CD14-positive monocyte (primary cell): ENCODE measurements at regions of chr4 and their contacts with region 1.

Region 1: DNA sequence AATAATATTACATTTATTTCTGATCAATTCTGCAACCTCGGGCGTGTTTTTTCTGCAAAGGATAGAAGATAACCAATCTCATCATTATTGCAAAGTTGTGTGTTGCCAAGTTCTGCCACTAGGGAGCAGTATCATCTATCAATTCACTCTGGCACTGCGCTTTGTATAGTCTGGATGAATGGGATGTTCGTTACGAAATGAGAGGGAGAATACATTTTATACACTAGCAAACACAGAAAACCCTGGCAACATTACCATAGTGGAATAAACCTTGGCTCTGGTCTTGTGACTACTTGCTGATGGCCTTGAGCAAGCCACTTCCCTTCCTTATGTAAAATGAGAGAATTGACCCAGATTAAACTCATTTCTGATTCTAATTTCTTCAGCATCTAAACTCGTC is 97.5 kb upstream of the ZNF518B start:
- DNase-seq: peak; percentile 35 to 62 (median 47)
- H3K4me3 ChIP-seq: no peak overlapping the region
- H3K4me3 Mint-ChIP-seq: no peak overlapping the region
- H3K27ac ChIP-seq: no peak overlapping the region
- H3K27ac Mint-ChIP-seq: peak overlapping the region in 1 of 7 donors; percentile 73
- H3K4me1 ChIP-seq: peaks cover 15 to 16% of the 10 kb centered on the region in 2 donors
- H3K4me1 Mint-ChIP-seq: peaks cover 30% of the 10 kb centered on the region
- H3K27me3 ChIP-seq: no peaks in the 10 kb centered on the region
- H3K27me3 Mint-ChIP-seq: no peaks in the 10 kb centered on the region
- CTCF ChIP-seq: peak; percentile 84

Region 2: DNA sequence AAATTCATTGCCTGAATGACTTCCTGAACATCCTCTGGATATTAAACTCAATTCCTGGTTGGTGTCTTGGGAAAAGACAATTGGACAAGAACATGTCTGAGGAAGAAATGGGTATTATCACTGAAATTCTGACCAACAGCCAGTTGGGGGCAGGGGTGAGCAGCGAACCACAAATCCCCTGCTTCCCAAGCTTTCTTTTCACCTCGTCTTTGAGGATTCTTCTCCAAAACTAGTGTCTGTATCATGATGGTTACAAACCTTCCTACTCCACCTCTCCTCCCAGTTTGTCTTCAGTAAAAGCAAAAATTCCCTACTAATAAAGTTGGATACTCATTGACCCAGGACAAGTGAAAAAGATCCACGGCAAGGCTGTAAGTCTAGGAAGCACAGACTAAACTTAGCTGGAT is 389.8 kb before region 1 on chr4:
- intact Hi-C with region 1: loop called in 1 of 2 experiments (anchors 5 kb)
- DNase-seq: peak; percentile 19 to 43 (median 41)
- H3K4me3 ChIP-seq: no peak overlapping the region
- H3K4me3 Mint-ChIP-seq: no peak overlapping the region
- H3K27ac ChIP-seq: no peak overlapping the region
- H3K27ac Mint-ChIP-seq: no peak overlapping the region
- H3K4me1 ChIP-seq: no peaks in the 10 kb centered on the region
- H3K4me1 Mint-ChIP-seq: peaks cover 8% of the 10 kb centered on the region
- H3K27me3 ChIP-seq: no peaks in the 10 kb centered on the region
- H3K27me3 Mint-ChIP-seq: peaks cover 0 to 3% (median 2%) of the 10 kb centered on the region in 3 donors
- CTCF ChIP-seq: peak; percentile 84

Region 3: GRCh38 chr4:11428899-11429698 is 874.4 kb after region 1 on chr4:
- intact Hi-C with region 1: loop called in 1 of 2 experiments (anchors 10 kb)
- DNase-seq: peak; percentile 45 to 60 (median 59)
- H3K4me3 ChIP-seq: peak overlapping the region; percentile 16 to 80 (median 34)
- H3K4me3 Mint-ChIP-seq: peak overlapping the region; percentile 81 to 95
- H3K27ac ChIP-seq: no peak overlapping the region
- H3K27ac Mint-ChIP-seq: peak overlapping the region in 2 of 7 donors; percentile 10 to 68
- H3K4me1 ChIP-seq: peaks cover 20 to 28% of the 10 kb centered on the region in 2 donors
- H3K4me1 Mint-ChIP-seq: peaks cover 21% of the 10 kb centered on the region
- H3K27me3 ChIP-seq: peaks cover 43 to 52% of the 10 kb centered on the region in 2 donors
- H3K27me3 Mint-ChIP-seq: peaks cover 42 to 62% (median 46%) of the 10 kb centered on the region in 3 donors
- CTCF ChIP-seq: peak; percentile 73